IMR-90 (cell line): ENCODE measurements at regions of chr5 and their contacts with region 1.

Region 1: DNA sequence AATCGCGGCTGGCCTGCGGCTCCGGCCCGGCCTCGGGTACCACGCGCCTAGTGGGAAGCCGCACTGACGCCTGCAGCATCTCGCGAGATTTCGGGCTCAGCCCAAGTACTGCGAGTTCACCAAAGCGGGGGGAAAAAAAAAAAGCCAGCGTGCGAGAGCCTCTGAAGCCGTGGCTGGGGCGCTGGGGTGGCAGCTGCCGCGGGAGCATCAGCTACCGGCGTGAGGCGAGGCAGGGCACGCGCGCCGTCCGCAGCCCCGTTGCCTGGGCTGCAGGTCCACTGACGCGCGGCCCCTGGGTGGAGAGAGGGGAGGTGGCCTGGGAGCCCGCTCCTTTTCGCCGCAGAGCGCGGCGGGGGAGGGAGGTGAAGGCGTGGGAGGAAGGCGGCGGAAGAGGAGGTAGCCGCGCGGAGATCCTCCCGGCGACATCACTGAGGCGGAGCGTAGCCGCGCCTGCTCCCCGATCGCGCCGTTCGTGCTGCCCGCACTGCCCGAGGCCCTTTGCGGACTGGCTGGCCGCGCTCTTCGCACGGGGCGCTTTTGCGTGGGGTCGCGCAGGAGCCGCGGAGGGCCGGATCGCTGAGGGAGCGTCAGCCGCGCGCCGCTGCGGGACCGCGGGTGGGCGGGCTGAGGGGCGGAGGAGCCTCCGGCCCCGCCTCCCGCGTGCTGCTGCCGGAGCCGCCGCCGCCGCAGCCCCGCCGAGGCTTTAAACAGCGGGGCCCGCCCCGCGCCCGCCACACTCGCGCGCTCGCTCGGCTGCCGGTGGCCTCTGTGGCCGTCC is at the start of gene SLC12A2:
- DNase-seq: peak; percentile 96
- ATAC-seq: peak; percentile 86
- H3K4me3 ChIP-seq: peak within 1 kb of the TSS; percentile 89
- H3K27ac ChIP-seq: peak within 1 kb of the TSS; percentile 92
- H3K4me1 ChIP-seq: no peaks in the 10 kb centered on the region
- H3K27me3 ChIP-seq: no peaks in the 10 kb centered on the region
- CTCF ChIP-seq: no peak
- POLR2A ChIP-seq: peak; percentile 89
- RAD21 ChIP-seq: no peak
- total RNA-seq, gene SLC12A2: 30.3 and 42.2 TPM in 2 replicates

Region 2: GRCh38 chr5:127564002-127564769 is 519.0 kb before region 1 on chr5:
- CTCF ChIA-PET with region 1: no interaction called
- POLR2A ChIA-PET with region 1: no interaction called
- dilution Hi-C with region 1: no loop called
- in situ Hi-C with region 1: loop called (anchors 10 kb)
- intact Hi-C with region 1: loop called (anchors 1 kb)
- DNase-seq: peak; percentile 53
- ATAC-seq: peak; percentile 48
- H3K4me3 ChIP-seq: no peak overlapping the region
- H3K27ac ChIP-seq: no peak overlapping the region
- H3K4me1 ChIP-seq: peaks cover 10% of the 10 kb centered on the region
- H3K27me3 ChIP-seq: peaks cover 4% of the 10 kb centered on the region; the same call in 1 of the 2 replicates
- CTCF ChIP-seq: peak; percentile 66
- POLR2A ChIP-seq: no peak
- RAD21 ChIP-seq: peak; percentile 76

Region 3: GRCh38 chr5:127757576-127757975 is 325.6 kb before region 1 on chr5:
- CTCF ChIA-PET with region 1: no interaction called
- POLR2A ChIA-PET with region 1: no interaction called
- dilution Hi-C with region 1: no loop called
- in situ Hi-C with region 1: no loop called
- intact Hi-C with region 1: loop called (anchors 1 kb)
- DNase-seq: peak; percentile 65
- ATAC-seq: no peak
- H3K4me3 ChIP-seq: no peak overlapping the region
- H3K27ac ChIP-seq: no peak overlapping the region
- H3K4me1 ChIP-seq: peaks cover 3% of the 10 kb centered on the region
- H3K27me3 ChIP-seq: no peaks in the 10 kb centered on the region
- CTCF ChIP-seq: peak; percentile 54
- POLR2A ChIP-seq: no peak
- RAD21 ChIP-seq: peak; percentile 76

Region 4: GRCh38 chr5:127875235-127876021 is 207.8 kb before region 1 on chr5:
- CTCF ChIA-PET with region 1: interaction called, 3 read pairs
- POLR2A ChIA-PET with region 1: no interaction called
- dilution Hi-C with region 1: no loop called
- in situ Hi-C with region 1: no loop called
- intact Hi-C with region 1: loop called (anchors 1 kb)
- DNase-seq: peak; percentile 52
- ATAC-seq: peak; percentile 71
- H3K4me3 ChIP-seq: no peak overlapping the region
- H3K27ac ChIP-seq: no peak overlapping the region
- H3K4me1 ChIP-seq: 0 out of 2 replicates have a peak, but pooled peaks cover 2% of the 10 kb centered on the region
- H3K27me3 ChIP-seq: no peaks in the 10 kb centered on the region
- CTCF ChIP-seq: peak; percentile 41
- POLR2A ChIP-seq: no peak
- RAD21 ChIP-seq: peak; percentile 51

Region 5: GRCh38 chr5:127898551-127899213 is 184.5 kb before region 1 on chr5:
- CTCF ChIA-PET with region 1: interaction called, 3 read pairs
- POLR2A ChIA-PET with region 1: no interaction called
- dilution Hi-C with region 1: no loop called
- in situ Hi-C with region 1: no loop called
- intact Hi-C with region 1: loop called (anchors 5 kb)
- DNase-seq: peak; percentile 61
- ATAC-seq: peak; percentile 90
- H3K4me3 ChIP-seq: no peak overlapping the region
- H3K27ac ChIP-seq: no peak overlapping the region
- H3K4me1 ChIP-seq: peaks cover 10% of the 10 kb centered on the region
- H3K27me3 ChIP-seq: no peaks in the 10 kb centered on the region
- CTCF ChIP-seq: no peak; the same call in 1 of the 2 replicates
- POLR2A ChIP-seq: no peak
- RAD21 ChIP-seq: no peak; the same call in 1 of the 2 replicates

Region 6: DNA sequence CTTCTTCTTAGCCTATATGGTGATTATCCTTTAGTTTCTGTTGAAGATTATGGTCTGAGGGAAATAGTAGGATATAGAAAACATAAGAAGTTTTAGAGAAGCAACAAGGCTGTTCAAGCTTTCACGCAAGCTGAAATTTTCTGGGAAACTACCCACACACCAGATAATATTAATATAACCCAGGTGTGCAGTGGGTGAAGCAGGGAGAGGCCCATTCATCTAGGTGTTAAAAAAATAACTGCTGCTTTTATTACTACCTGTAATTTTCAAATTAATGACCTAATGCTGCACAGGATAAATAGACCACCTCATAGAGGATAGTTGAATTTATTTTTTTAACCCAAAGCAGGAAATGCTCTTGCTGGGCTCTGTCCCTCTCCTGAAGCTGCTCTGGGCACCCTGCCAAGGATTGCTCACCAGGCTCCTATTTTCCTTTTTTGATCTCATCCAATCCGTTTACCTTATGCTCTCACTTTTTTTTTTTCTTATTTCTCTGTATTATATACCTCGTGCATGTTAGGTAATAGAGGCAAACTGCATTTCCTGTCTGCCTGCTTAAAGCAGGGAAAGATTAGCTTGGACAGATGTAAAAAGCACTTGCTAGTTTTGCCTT is 124.0 kb before region 1 on chr5:
- CTCF ChIA-PET with region 1: no interaction called
- POLR2A ChIA-PET with region 1: no interaction called
- dilution Hi-C with region 1: no loop called
- in situ Hi-C with region 1: no loop called
- intact Hi-C with region 1: loop called (anchors 2 kb)
- DNase-seq: peak; percentile 92
- ATAC-seq: peak; percentile 79
- H3K4me3 ChIP-seq: no peak overlapping the region
- H3K27ac ChIP-seq: no peak overlapping the region
- H3K4me1 ChIP-seq: peaks cover 13% of the 10 kb centered on the region
- H3K27me3 ChIP-seq: no peaks in the 10 kb centered on the region
- CTCF ChIP-seq: no peak
- POLR2A ChIP-seq: no peak
- RAD21 ChIP-seq: no peak

Region 7: DNA sequence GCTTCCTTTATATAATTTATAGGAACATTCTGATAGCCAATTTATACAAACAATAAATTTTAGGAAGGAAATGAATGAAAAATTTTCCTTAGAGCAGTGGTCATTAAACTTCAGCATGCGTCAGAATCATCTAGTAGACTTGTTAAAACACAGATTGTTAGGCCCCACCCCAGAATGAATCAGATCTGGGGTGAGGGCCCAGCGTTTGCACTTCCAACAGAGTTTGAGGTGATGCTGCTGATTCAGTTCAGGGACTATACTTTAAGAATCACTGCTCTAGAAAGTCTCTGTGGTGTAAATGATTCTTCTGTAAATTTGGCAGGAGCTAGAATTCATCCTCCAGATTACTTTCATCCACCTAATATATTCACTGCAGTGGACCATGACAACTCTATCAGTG is 80.8 kb after region 1 on chr5:
- CTCF ChIA-PET with region 1: no interaction called
- POLR2A ChIA-PET with region 1: interaction called, 16 read pairs
- dilution Hi-C with region 1: no loop called
- in situ Hi-C with region 1: no loop called
- intact Hi-C with region 1: no loop called
- DNase-seq: peak; percentile 60
- ATAC-seq: peak; percentile 63
- H3K4me3 ChIP-seq: no peak overlapping the region
- H3K27ac ChIP-seq: no peak overlapping the region
- H3K4me1 ChIP-seq: no peaks in the 10 kb centered on the region
- H3K27me3 ChIP-seq: no peaks in the 10 kb centered on the region
- CTCF ChIP-seq: no peak
- POLR2A ChIP-seq: no peak
- RAD21 ChIP-seq: no peak

Region 8: DNA sequence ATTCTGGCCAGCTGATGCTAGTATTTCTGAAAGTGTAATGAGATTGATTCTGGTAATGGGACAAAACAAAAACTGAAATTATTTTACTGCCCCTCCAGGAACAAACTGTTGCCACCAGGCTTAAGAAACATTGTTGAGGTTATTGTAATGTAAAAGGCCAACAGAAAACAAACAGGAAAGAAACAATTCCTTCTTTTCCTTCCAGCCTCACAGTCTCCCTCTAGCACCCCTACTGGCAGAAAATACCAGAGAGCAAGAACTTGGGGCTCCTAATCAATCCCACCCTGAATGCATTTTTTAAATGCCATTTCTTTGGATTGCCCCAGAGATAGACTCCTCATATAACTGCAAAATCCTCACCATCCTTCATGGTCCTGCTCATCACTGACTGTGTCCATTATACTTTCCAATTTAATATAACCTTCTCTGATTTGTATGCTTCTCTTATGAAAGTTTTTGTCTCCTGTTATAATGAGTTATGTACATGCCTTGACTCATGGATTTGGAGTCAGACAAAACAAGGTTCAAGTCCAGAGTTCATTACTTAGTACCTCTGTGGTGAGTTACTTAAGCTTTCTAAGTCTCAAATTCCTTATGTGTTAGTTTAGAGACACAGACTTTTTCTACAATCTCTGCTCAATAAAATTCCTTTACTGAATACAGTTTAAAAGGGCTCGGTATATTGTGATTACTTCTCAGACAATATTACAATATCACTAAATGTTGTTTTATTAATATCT is 612.7 kb after region 1 on chr5:
- CTCF ChIA-PET with region 1: no interaction called
- POLR2A ChIA-PET with region 1: no interaction called
- dilution Hi-C with region 1: no loop called
- in situ Hi-C with region 1: no loop called
- intact Hi-C with region 1: no loop called
- DNase-seq: peak; percentile 7
- ATAC-seq: no peak
- H3K4me3 ChIP-seq: no peak overlapping the region
- H3K27ac ChIP-seq: no peak overlapping the region
- H3K4me1 ChIP-seq: 0 out of 2 replicates have a peak, but pooled peaks cover 2% of the 10 kb centered on the region
- H3K27me3 ChIP-seq: no peaks in the 10 kb centered on the region
- CTCF ChIP-seq: peak; percentile 30
- POLR2A ChIP-seq: no peak
- RAD21 ChIP-seq: no peak